ENCODE measurements at regions of chr7 and their contacts with region 1.

Region 1: DNA sequence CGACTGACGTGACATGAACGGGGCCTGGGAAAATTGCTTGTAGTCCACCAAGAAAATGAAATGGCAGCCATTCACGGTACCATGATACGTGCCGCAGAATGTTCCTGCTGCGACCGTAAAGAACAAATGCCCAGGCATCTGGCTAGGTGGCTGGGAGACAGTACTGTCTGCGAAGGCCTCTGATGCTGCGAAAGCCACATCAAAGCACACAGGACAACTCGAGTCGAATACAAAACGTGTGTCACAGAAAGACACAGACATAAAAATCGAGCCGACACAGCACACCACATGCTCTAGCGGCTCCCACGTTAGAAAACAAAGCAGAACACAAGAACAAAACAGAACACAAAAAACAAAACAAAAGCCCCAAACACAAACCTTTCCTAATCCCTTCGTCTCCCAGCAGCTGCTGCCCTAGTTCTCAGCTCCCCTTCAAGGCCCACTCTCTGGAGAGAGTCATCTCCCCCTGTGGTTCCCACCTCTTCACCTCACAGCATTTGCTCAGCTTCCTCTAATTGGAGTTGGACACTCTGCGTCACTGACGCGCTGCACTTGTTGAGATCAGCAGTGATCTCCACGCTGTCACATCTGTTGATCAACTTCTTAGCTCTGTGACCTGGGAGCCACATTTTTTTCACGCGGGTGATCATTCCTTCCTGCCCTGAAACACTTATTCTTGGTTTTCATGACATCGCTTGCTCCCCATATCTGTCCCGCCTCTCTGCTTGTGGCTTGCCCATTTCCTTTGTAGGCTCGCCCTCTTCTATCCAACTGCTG is 112.2 kb downstream of the CLEC2L start:
- DNase-seq: no peak
- ATAC-seq: no peak
- H3K4me3 ChIP-seq: no peak overlapping the region
- H3K27ac ChIP-seq: no peak overlapping the region
- H3K4me1 ChIP-seq: no peaks in the 10 kb centered on the region
- H3K27me3 ChIP-seq: no peaks in the 10 kb centered on the region
- CTCF ChIP-seq: no peak
- EP300 ChIP-seq: no peak
- POLR2A ChIP-seq: no peak
- RAD21 ChIP-seq: no peak

Region 2: GRCh38 chr7:139494835-139495579 is 140.7 kb before region 1 on chr7:
- CTCF ChIA-PET with region 1: no interaction called
- POLR2A ChIA-PET with region 1: interaction called, 10 read pairs
- RAD21 ChIA-PET with region 1: no interaction called
- SMC1A ChIA-PET with region 1: no interaction called
- in situ Hi-C with region 1: no loop called
- intact Hi-C with region 1: no loop called
- DNase-seq: peak; percentile 47
- ATAC-seq: peak; percentile 88
- H3K4me3 ChIP-seq: 0 out of 2 replicates have a peak overlapping the region, but pooled peaks have one; percentile 28
- H3K27ac ChIP-seq: peak overlapping the region; percentile 84
- H3K4me1 ChIP-seq: peaks cover 24% of the 10 kb centered on the region
- H3K27me3 ChIP-seq: no peaks in the 10 kb centered on the region
- CTCF ChIP-seq: no peak
- EP300 ChIP-seq: peak; percentile 43 to 64; a peak in 2 of 4 replicates
- POLR2A ChIP-seq: no peak
- RAD21 ChIP-seq: peak; percentile 2; the same call in 1 of the 2 replicates

Region 3: GRCh38 chr7:139543801-139544603 is 91.7 kb before region 1 on chr7:
- CTCF ChIA-PET with region 1: no interaction called
- POLR2A ChIA-PET with region 1: no interaction called
- RAD21 ChIA-PET with region 1: no interaction called
- SMC1A ChIA-PET with region 1: no interaction called
- in situ Hi-C with region 1: no loop called
- intact Hi-C with region 1: no loop called
- DNase-seq: no peak
- ATAC-seq: peak; percentile 42; the same call in 1 of the 3 replicates
- H3K4me3 ChIP-seq: no peak overlapping the region
- H3K27ac ChIP-seq: no peak overlapping the region
- H3K4me1 ChIP-seq: no peaks in the 10 kb centered on the region
- H3K27me3 ChIP-seq: peaks cover 0 to 3% of the 10 kb centered on the region in 2 experiments; a peak in 1 of 4 replicates
- CTCF ChIP-seq: no peak
- EP300 ChIP-seq: no peak
- POLR2A ChIP-seq: no peak
- RAD21 ChIP-seq: no peak

Region 4: DNA sequence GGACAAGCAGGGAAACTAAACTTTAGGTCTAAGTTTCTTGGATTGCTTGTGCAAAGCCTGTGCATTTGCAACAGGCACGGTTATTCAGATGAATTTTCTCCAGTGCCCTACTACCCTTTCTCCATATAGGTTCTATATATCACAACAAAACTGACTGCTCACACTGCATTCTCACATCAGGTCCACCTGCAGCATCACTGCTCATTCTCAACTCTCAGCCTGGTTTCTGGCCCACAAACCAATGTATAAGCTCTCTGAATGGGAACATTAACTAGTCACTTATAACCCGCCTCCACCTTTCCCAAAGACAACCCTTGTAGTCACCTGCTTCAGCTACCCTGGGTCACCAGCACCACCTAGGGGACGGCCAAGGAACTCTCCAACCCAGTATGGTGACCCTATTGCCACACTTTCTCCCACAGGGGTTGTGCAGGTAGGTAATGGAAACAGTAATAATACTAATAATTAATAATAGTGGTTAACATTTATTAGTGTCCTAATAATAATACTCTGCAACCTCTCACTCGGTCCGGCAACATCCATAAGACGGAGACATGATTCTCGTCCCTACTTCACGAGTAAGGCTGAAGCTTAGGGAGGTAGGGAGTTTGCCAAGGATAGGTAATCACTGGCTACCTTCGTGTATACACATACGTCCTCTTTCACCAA is 14.9 kb before region 1 on chr7:
- CTCF ChIA-PET with region 1: interaction called, 11 read pairs
- POLR2A ChIA-PET with region 1: no interaction called
- RAD21 ChIA-PET with region 1: no interaction called
- SMC1A ChIA-PET with region 1: interaction called, 5 read pairs
- in situ Hi-C with region 1: no loop called
- intact Hi-C with region 1: no loop called
- DNase-seq: no peak
- ATAC-seq: peak; percentile 96
- H3K4me3 ChIP-seq: no peak overlapping the region
- H3K27ac ChIP-seq: no peak overlapping the region
- H3K4me1 ChIP-seq: no peaks in the 10 kb centered on the region
- H3K27me3 ChIP-seq: no peaks in the 10 kb centered on the region
- CTCF ChIP-seq: peak; percentile 54 to 84 (median 83)
- EP300 ChIP-seq: no peak
- POLR2A ChIP-seq: no peak
- RAD21 ChIP-seq: peak; percentile 67

Region 5: DNA sequence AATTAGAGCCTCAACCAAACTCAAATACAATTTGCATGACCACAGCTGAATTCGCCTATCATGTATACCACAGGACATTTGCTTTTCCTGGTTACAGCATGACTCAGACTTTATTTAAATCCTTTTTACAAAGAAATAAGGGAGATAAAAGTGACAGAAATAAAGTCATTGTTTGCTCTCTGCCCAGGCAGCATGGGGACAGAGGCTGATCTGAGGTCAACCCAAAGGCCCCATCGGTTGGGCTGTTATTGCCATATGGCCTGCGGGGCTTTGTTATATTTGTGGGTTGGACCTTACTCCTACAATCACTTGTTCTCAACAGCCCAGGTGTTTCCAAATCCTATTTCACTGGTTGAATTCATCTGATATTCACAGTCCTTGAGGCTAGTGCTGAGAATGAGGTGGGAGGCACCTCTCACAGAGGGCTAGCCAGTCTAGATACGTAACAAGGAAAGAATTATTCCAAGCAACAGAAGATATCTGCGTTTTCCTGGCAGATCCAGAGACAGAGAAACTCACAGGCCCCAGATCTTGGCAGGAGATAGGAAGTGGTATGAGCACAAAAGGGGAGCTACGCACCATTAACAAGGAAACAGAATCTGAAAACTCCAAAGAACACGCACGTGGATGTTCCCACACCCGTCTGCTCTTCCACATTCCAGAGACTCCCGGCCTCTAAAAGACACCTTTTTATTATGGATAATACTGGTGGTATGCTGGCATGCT is 24.8 kb after region 1 on chr7:
- CTCF ChIA-PET with region 1: no interaction called
- POLR2A ChIA-PET with region 1: no interaction called
- RAD21 ChIA-PET with region 1: no interaction called
- SMC1A ChIA-PET with region 1: no interaction called
- in situ Hi-C with region 1: no loop called
- intact Hi-C with region 1: no loop called
- DNase-seq: no peak
- ATAC-seq: no peak
- H3K4me3 ChIP-seq: no peak overlapping the region
- H3K27ac ChIP-seq: no peak overlapping the region
- H3K4me1 ChIP-seq: no peaks in the 10 kb centered on the region
- H3K27me3 ChIP-seq: no peaks in the 10 kb centered on the region
- CTCF ChIP-seq: no peak
- EP300 ChIP-seq: no peak
- POLR2A ChIP-seq: no peak
- RAD21 ChIP-seq: no peak